Mammary epithelial cell (primary cell): ENCODE measurements at regions of chr2 and their contacts with region 1.

Region 1: DNA sequence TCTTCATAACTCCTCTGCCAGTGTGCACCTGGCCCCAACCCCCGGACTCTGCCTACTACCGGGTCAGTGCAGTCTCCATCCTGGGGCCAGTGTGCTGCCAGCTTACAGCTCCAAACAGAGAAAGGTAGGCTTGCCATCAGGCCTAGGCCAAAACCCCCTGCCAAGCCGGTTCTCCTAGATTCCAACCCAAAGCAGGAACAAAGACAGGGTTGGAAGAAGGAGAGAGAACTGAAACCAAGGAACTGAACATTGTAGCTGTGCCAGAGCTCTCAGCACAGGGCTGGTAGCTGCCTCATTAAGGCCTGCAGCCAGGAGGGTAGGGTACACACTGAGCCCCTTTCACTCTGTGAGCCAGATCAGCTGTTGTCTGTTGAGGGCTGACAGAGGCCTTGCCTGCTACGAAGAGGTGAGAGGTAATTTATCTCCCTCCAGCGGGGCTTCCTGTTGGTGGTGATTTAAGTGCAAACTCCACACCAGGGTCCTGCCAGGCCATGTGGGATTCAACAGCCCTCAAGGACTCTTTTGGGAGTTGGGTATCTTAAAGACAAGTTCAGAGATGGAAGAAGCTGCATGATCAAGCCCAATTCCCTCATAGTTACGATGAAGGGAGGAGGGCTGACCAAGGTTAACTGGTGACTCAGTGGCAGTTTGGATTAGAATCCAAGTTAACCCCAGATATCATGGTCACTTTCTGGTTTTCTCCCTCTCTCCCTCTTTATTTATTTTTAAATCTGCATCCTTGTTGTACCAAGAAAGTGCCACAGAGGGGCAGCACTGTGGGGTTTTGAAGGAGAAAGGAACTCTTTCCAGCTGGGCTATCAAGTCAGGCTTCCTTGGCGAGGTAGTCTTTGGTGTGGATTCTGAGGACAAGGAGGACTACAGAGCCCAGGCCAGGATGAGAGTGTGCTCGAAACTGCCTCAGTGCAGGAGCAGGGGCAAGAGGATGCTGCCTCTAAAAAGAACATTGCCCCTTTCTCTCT is 48.1 kb downstream of the CYRIA start:
- DNase-seq: no peak
- H3K4me3 ChIP-seq: no peak overlapping the region
- H3K27ac ChIP-seq: no peak overlapping the region
- H3K4me1 ChIP-seq: peaks cover 6% of the 10 kb centered on the region
- H3K27me3 ChIP-seq: no peaks in the 10 kb centered on the region
- CTCF ChIP-seq: peak; percentile 36 to 66

Region 2: GRCh38 chr2:16537347-16537746 is 80.2 kb before region 1 on chr2:
- CTCF ChIA-PET with region 1: no interaction called
- dilution Hi-C with region 1: no loop called
- in situ Hi-C with region 1: no loop called
- intact Hi-C with region 1: no loop called
- DNase-seq: peak; percentile 58
- H3K4me3 ChIP-seq: no peak overlapping the region
- H3K27ac ChIP-seq: no peak overlapping the region
- H3K4me1 ChIP-seq: peaks cover 5% of the 10 kb centered on the region
- H3K27me3 ChIP-seq: no peaks in the 10 kb centered on the region
- CTCF ChIP-seq: no peak

Region 3: DNA sequence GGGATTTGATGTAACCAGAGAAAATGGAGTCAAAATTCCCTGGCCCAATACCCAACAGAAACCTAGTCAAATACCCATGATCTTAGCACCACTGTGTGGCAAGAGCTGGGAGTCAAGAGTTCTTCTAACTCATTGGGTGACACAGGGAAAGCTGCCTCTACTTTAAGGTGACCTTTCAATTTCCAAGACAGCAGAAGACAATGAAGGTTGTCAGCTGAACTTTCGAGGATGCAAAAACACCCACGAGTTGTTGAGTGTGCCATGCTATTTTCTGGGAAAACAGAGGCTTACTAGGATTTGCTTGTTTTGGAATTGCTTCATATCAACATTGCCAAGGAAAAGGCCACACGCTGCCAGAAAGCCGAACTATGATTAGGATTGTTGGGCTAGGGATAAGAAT is 109.7 kb after region 1 on chr2:
- CTCF ChIA-PET with region 1: interaction called, 6 read pairs
- dilution Hi-C with region 1: no loop called
- in situ Hi-C with region 1: no loop called
- intact Hi-C with region 1: loop called (anchors 1 kb)
- DNase-seq: no peak
- H3K4me3 ChIP-seq: no peak overlapping the region
- H3K27ac ChIP-seq: no peak overlapping the region
- H3K4me1 ChIP-seq: no peaks in the 10 kb centered on the region
- H3K27me3 ChIP-seq: peaks cover 1% of the 10 kb centered on the region
- CTCF ChIP-seq: peak in 1 of 2 donors; percentile 31